ENCODE measurements at regions of chr4 and their contacts with region 1.

Region 1: DNA sequence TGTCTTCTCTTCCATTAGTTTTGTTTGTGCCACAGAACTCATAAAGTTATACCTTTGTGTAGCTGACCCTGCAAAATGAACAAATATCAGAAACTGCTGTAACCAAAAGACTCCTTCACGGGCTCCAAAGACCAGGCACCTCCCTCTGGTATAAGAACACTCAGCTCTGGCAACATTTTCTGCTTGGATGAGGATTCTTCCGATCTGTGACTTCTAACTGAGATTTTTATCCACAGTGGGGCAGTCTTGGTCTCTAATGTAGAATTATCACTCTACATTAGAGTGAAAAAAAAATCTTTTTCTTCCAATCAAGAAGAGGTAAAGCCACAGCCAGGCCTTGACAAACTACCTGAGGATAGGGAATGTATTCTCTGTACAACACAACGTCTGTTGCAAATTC is 38.5 kb upstream of the PRSS48 start:
- DNase-seq: no peak
- H3K4me3 ChIP-seq: no peak overlapping the region
- H3K27ac ChIP-seq: no peak overlapping the region
- H3K4me1 ChIP-seq: no peaks in the 10 kb centered on the region
- H3K27me3 ChIP-seq: no peaks in the 10 kb centered on the region
- CTCF ChIP-seq: no peak

Region 2: DNA sequence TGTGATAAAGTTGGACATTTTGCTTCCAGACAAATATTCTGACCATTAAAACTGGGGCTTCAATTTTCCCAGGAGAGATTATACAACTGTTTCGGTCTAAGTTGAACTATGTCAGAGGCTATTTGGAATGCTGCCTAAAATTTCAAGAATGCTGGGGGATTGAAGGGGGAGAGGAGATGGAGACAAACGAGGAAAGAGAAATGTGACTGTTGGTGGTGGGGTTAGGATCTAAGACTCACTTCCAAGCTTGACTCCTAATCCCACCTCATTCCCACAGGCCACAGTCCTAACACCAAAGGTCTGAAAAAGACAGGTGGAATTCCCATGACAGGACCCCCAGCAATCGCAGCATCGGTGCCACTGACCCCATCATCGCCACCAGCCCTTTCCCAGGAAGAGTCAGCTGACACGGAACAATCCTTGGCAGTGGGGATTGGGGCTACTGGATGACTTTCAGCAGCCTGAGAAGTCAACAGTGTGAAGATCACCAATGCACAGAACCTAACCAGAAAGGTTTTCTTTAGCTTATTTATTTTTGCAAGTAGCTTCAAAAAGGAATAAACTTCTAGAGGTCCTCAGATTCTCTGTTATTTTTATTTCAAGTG is 35.5 kb before region 1 on chr4:
- CTCF ChIA-PET with region 1: no interaction called
- dilution Hi-C with region 1: loop called (anchors 5 kb)
- in situ Hi-C with region 1: no loop called
- intact Hi-C with region 1: no loop called
- DNase-seq: no peak
- H3K4me3 ChIP-seq: no peak overlapping the region
- H3K27ac ChIP-seq: no peak overlapping the region
- H3K4me1 ChIP-seq: no peaks in the 10 kb centered on the region
- H3K27me3 ChIP-seq: no peaks in the 10 kb centered on the region
- CTCF ChIP-seq: no peak

Measured in mammary epithelial cell (primary cell).